ENCODE measurements at regions of chr5 and their contacts with region 1.

Region 1: DNA sequence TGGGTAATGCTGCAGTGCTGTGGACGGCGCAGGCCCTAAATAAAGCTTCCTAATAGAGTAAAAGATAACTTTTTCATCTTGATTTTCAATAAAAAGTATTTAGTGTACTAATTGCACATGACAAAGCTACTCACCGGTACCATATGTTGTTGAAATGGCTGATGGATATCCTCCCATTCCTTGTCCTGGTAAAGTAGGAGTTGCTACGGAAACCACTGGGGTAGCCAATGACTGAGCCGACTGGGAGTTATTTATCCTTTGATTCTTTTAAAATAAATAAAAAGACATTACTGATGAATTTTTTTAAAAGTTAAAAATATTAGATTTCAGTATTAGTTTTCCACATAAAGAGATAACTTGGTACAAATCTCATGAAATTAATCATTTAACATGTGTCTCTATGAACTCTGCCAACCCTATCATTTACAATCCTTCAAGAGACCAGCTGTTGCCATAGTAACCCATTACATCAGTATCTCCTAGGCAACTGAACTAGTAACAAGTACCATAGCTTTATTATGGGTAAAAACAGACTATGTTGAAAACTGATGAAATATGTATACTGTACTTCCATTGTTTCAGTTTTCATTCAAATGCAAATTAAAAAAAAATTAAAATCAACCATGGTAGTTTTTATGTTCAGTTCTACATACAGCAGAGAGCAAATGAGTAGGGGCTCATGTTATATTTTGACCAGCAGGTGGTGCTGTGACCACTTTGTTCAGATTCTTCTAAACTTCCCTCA is 153.7 kb downstream of the MEF2C start:
- DNase-seq: peak in 4 of 5 donors; percentile 49 to 84 (median 59)
- H3K4me3 ChIP-seq: no peak overlapping the region
- H3K27ac ChIP-seq: no peak overlapping the region
- H3K4me1 ChIP-seq: peaks cover 3% of the 10 kb centered on the region
- H3K27me3 ChIP-seq: no peaks in the 10 kb centered on the region
- CTCF ChIP-seq: peak; percentile 51 to 81 (median 80)
- EP300 ChIP-seq: no peak
- POLR2A ChIP-seq: no peak

Region 2: GRCh38 chr5:88883059-88883835 is 154.0 kb after region 1 on chr5 and contains the start of gene MEF2C:
- intact Hi-C with region 1: loop called in 2 of 4 experiments (anchors 5 to 10 kb)
- DNase-seq: peak; percentile 77 to 91 (median 82)
- H3K4me3 ChIP-seq: peak within 1 kb of the TSS; percentile 48
- H3K27ac ChIP-seq: peak within 1 kb of the TSS; percentile 82 to 87
- H3K4me1 ChIP-seq: peaks cover 3% of the 10 kb centered on the region
- H3K27me3 ChIP-seq: no peaks in the 10 kb centered on the region
- CTCF ChIP-seq: no peak
- EP300 ChIP-seq: no peak
- POLR2A ChIP-seq: peak; percentile 89
- total RNA-seq, gene MEF2C: 27.2 to 91.4 (median 77.5) TPM

Region 3: DNA sequence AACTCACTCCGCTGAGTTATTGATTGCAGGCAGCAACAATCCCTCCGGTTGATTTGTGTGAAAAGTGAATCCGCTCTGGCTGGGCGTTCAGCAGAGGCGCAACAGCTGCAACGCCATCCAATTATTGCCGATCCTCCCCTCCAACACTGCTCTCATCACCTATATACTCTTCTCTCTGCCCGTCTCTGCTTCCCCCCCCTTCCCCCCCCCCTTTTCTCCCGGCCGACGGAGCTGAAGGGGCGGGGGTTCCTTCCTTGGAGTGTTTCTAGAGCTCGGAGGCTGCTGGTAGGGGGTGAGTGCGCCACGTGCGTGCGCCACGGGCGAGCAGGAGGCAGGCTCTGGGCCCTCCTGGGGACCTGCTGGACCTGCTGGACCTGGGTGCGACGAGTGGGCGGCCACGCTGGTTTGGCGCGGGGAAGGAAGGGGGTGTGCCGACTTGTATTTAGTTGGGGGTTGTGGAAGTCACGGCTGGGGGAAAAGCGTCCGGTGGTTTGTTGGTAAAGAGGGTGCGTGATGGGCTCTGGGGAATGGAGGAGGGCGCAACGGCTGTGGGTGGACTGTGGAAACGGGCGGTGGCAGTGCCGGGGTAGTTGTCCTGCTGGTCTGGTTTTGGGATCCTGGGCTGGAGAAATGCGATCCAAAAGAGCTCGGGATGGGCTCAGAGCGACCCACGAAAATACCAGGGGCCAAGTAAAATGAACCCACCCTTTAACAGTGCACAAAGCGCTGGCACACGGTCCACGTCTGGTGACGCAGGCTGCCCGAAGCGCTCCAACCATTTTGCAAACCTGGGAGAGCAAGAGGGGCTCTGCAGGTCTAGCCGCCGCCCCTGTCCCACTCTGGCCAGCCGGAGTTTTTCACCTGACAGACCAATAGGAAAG is 160.2 kb after region 1 on chr5:
- intact Hi-C with region 1: loop called in 2 of 4 experiments (anchors 5 to 10 kb)
- DNase-seq: peak; percentile 81 to 88 (median 84)
- H3K4me3 ChIP-seq: peak overlapping the region; percentile 59
- H3K27ac ChIP-seq: peak overlapping the region; percentile 85 to 90
- H3K4me1 ChIP-seq: peaks cover 3% of the 10 kb centered on the region
- H3K27me3 ChIP-seq: no peaks in the 10 kb centered on the region
- CTCF ChIP-seq: no peak
- EP300 ChIP-seq: no peak
- POLR2A ChIP-seq: peak; percentile 54

Region 4: GRCh38 chr5:88940713-88941112 is 211.5 kb after region 1 on chr5:
- intact Hi-C with region 1: loop called in 1 of 4 experiments (anchors 10 kb)
- DNase-seq: no peak
- H3K4me3 ChIP-seq: no peak overlapping the region
- H3K27ac ChIP-seq: no peak overlapping the region
- H3K4me1 ChIP-seq: peaks cover 10% of the 10 kb centered on the region
- H3K27me3 ChIP-seq: no peaks in the 10 kb centered on the region
- CTCF ChIP-seq: no peak
- EP300 ChIP-seq: no peak
- POLR2A ChIP-seq: no peak

Region 5: GRCh38 chr5:89232139-89232603 is 502.9 kb after region 1 on chr5:
- intact Hi-C with region 1: no loop called
- DNase-seq: no peak
- H3K4me3 ChIP-seq: no peak overlapping the region
- H3K27ac ChIP-seq: no peak overlapping the region
- H3K4me1 ChIP-seq: no peaks in the 10 kb centered on the region
- H3K27me3 ChIP-seq: no peaks in the 10 kb centered on the region
- CTCF ChIP-seq: no peak
- EP300 ChIP-seq: no peak
- POLR2A ChIP-seq: no peak

Region 6: DNA sequence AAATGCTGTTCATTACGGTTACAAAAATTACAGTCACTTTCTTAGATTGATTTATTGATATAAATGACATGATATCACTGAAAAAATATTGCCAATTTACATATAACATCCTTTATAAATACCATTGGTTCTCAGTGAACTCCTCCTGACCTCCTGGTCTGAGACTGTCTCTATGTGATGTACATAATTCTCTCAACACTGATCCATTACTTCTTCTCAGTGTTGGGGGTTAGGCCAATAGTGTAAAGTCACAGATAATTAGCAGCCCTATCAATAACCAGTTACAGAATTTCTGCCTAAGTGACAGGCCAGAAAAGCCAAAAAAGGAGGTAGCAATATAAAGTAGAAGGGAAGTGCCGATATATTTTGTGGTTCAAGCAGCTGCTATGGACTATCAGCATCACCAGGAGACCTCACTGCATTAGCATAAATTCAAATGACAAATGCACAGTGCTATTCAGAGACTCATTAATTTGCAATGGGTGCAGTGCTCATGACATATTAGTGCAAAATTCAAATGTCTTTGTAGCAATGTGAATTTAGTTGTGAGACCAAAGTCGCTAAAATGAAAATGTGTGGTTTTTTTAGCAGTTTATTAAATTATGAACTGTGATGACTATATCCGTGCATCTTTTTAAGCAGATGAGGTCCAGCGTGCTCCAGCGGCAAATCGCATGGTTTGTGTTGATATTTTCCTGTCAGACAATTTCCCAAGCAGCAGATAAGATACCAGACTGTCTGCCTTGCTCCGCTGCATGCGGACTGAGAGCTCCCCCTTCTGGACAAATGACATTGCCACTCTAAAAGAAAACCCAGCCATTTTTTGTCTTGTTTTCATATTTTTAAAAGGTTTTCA is 1535.7 kb after region 1 on chr5:
- intact Hi-C with region 1: loop called in 1 of 4 experiments (anchors 10 kb)
- DNase-seq: peak; percentile 20 to 54 (median 47)
- H3K4me3 ChIP-seq: no peak overlapping the region
- H3K27ac ChIP-seq: no peak overlapping the region
- H3K4me1 ChIP-seq: no peaks in the 10 kb centered on the region
- H3K27me3 ChIP-seq: no peaks in the 10 kb centered on the region
- CTCF ChIP-seq: peak; percentile 24 to 45 (median 39)
- EP300 ChIP-seq: no peak
- POLR2A ChIP-seq: no peak